A673 (cell line): ENCODE measurements at regions of chr12 and their contacts with region 1.

Region 1: DNA sequence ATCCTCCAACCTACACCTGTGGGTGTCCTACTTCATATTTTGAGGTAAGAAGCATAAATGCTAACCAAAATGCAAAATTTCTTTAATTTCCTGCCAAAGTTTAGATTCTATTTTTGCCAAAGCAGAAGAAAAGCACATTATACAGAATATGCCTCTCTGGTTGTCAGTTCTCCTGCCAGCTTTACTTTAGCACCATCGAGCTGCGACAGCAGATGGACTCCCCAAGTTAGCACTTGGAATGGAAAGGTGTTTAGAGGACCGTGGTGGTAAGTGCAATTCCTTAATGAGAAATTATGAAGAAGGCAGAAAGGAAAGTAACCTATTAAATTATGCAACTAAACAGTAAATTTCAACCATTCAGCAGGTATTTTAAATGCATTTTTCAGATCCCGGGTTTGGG is 326.6 kb downstream of the RERGL start:
- DNase-seq: no peak
- H3K4me3 ChIP-seq: no peak overlapping the region
- H3K27ac ChIP-seq: no peak overlapping the region
- H3K4me1 ChIP-seq: no peaks in the 10 kb centered on the region
- H3K27me3 ChIP-seq: no peaks in the 10 kb centered on the region
- CTCF ChIP-seq: no peak

Region 2: DNA sequence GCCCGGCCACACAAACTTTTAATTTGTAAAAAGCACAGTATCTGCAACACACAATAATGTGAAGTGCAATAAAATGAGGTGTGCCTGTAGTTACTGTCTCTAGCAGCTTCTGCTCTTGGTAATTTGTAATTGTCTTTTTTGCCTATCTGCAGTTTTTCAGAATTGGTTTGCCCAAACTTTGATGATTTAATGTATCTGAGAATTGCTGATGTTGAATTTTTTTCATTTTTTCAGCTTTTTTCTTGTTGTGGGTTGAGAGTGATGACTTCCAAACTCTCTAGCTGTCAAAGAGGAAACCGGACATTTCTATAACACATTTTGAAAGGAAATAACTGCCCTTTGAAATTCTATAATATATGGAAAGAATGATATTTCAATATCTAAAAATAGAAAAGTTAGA is 89.7 kb after region 1 on chr12:
- CTCF ChIA-PET with region 1: no interaction called
- POLR2A ChIA-PET with region 1: no interaction called
- intact Hi-C with region 1: loop called (anchors 2 kb)
- DNase-seq: no peak
- H3K4me3 ChIP-seq: no peak overlapping the region
- H3K27ac ChIP-seq: no peak overlapping the region
- H3K4me1 ChIP-seq: no peaks in the 10 kb centered on the region
- H3K27me3 ChIP-seq: no peaks in the 10 kb centered on the region
- CTCF ChIP-seq: no peak